Activated CD4-positive, alpha-beta memory T cell treated with anti-CD3 and anti-CD28 coated beads, Interleukin-2, amount 10 ng/mL, durations not matched to agents 7 days and 5 days (primary cell): ENCODE measurements at regions of chr17 and their contacts with region 1.

Region 1: GRCh38 chr17:28335201-28335955 is at the starts of genes IFT20 and TNFAIP1:
- DNase-seq: peak; percentile 99
- H3K4me3 Mint-ChIP-seq: peak within 1 kb of the TSS; percentile 98
- H3K27ac Mint-ChIP-seq: peak within 1 kb of the TSS; percentile 95
- H3K4me1 Mint-ChIP-seq: peaks cover 46% of the 10 kb centered on the region
- H3K27me3 Mint-ChIP-seq: no peaks in the 10 kb centered on the region
- total RNA-seq, gene IFT20: 22.2 to 25.7 TPM
- total RNA-seq, gene TNFAIP1: 25.2 to 26.5 TPM

Region 2: DNA sequence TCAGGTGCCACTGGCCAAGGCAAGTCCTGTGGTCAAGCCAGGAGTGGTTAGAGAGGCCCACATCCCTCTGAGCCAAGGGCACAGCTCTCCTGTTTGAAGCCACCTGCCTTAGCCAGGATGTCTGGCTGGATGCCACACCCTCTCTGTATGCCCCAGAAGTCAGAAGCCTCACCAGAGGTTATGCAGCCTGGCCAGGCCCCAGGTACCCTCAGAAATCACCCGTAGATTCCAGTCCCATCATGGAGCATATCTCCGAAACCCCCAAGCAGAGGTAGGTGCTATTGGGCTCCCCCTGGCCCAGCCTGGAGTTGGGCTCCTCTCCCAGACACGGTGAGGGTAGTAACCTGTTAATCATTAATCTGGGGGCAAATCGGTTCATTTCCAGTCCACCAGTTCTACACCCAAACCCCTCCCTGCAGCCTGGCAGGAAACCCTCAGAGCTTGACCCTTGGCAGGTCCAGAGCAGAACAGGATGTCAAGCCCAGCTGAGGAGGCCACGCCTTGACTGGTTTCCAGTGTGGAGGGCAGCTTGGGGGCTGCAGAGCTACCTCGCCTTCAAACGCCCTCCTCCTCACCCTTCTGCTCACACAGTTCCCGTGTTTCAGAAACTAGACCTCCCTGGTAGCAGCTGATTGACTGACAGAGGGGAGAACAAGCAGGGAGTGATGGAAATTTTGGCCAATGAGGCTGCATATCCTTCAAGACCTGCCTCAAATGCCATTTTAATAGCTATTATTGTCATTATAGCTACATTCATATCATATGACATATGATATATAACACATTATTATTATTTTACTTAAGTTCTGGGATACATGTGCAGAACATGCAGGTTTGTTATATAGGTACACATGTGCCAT is 76.8 kb before region 1 on chr17:
- CTCF ChIA-PET with region 1: no interaction called
- POLR2A ChIA-PET with region 1: no interaction called
- DNase-seq: no peak
- H3K4me3 Mint-ChIP-seq: no peak overlapping the region
- H3K27ac Mint-ChIP-seq: no peak overlapping the region
- H3K4me1 Mint-ChIP-seq: no peaks in the 10 kb centered on the region
- H3K27me3 Mint-ChIP-seq: peaks cover 6% of the 10 kb centered on the region

Region 3: GRCh38 chr17:28318759-28319660 is 16.4 kb before region 1 on chr17 and contains the start of gene TMEM97:
- CTCF ChIA-PET with region 1: interaction called, 13 read pairs
- POLR2A ChIA-PET with region 1: interaction called, 29 read pairs
- DNase-seq: peak; percentile 95
- H3K4me3 Mint-ChIP-seq: peak within 1 kb of the TSS; percentile 89
- H3K27ac Mint-ChIP-seq: peak within 1 kb of the TSS; percentile 55
- H3K4me1 Mint-ChIP-seq: peaks cover 41% of the 10 kb centered on the region
- H3K27me3 Mint-ChIP-seq: no peaks in the 10 kb centered on the region
- total RNA-seq, gene TMEM97: 23.3 to 26.6 TPM

Region 4: GRCh38 chr17:28346746-28347246 is 11.4 kb after region 1 on chr17:
- CTCF ChIA-PET with region 1: no interaction called
- POLR2A ChIA-PET with region 1: interaction called, 35 read pairs
- DNase-seq: no peak
- H3K4me3 Mint-ChIP-seq: no peak overlapping the region
- H3K27ac Mint-ChIP-seq: no peak overlapping the region
- H3K4me1 Mint-ChIP-seq: no peaks in the 10 kb centered on the region
- H3K27me3 Mint-ChIP-seq: no peaks in the 10 kb centered on the region

Region 5: DNA sequence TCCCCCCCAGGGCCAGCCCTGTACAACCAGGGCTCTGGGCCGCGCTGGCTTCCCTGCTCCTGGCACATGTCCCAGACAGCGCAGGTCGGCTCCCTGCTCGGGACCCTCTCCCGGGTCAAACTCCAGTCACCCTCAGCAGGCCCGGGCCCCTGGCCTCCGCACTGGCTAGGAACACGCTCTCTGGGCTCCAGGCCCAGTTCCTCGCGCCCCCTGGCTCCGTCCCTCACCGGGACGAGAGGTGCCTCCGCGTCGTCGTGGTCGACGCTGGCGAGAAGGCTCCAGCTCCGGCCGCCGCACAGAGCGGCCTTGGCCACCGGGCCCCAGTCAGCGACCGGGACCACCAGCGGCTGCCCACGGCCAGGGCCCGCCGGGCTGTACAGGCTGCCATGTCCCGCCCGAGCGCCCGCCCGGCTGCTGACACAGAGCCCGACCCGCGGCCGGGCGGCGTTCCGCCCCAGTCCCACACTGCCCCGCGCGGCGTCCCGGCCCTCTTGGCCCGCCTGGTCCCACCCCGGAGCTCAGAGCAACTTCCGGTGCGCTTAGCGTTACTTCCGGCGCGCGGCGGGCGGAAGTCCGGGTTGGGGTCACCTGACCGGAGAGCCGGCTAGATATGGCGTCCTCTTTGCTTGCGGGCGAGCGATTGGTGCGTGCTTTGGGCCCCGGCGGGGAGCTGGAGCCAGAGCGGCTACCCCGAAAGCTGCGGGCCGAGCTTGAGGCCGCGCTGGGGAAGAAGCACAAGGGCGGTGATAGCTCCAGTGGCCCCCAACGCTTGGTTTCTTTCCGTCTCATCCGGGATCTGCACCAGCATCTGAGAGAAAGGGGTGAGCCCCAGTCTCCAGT is 21.9 kb after region 1 on chr17 and contains the start of gene POLDIP2:
- CTCF ChIA-PET with region 1: interaction called, 36 read pairs
- POLR2A ChIA-PET with region 1: interaction called, 91 read pairs
- DNase-seq: peak; percentile 97
- H3K4me3 Mint-ChIP-seq: peak within 1 kb of the TSS; percentile 95
- H3K27ac Mint-ChIP-seq: peak within 1 kb of the TSS; percentile 86
- H3K4me1 Mint-ChIP-seq: peaks cover 38% of the 10 kb centered on the region
- H3K27me3 Mint-ChIP-seq: no peaks in the 10 kb centered on the region
- total RNA-seq, gene POLDIP2: 54.3 to 56.2 TPM

Region 6: DNA sequence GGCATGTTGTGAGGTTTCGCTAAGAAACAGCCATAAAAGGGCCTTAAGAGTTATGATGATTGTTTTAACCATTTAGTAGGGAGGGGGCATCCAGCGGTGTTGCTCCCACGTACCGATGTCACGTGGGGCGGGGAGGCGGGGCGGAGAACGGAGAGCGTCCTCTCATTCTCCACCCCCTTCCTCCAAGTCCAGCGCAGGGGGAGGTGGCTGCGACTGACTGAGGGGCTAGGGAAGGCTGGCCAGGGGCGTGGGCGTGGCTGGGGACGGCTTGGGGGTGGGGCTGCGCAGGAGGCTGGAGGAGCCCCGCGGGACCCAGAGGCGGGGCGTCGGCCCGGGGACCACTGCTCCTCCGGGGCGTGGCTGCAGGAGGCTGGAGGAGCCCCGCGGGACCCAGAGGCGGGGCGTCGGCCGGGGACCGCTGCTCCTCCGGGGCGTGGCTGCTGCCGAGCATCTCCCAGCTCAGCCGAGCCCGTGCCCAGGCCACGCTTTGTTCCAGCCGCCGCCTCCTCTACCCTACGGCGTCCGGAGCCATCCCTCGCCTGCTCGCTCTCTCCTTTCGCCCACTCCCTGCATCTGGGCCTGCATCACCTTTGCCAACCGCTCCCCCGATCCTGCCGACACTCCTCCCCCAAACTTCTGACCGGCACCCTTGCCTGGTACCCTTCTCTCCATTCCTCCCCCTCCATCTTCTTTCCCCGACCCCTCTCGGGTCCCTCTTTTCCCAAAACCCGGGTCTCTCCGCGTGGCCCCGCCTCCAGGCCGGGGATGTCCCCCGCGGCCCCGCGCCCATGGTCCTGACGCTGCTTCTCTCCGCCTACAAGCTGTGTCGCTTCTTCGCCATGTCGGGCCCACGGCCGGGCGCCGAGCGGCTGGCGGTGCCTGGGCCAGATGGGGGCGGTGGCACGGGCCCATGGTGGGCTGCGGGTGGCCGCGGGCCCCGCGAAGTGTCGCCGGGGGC is 36.1 kb after region 1 on chr17 and contains the start of gene SARM1:
- CTCF ChIA-PET with region 1: no interaction called
- POLR2A ChIA-PET with region 1: interaction called, 18 read pairs
- DNase-seq: peak; percentile 90
- H3K4me3 Mint-ChIP-seq: peak within 1 kb of the TSS; percentile 90
- H3K27ac Mint-ChIP-seq: peak within 1 kb of the TSS; percentile 77
- H3K4me1 Mint-ChIP-seq: peaks cover 23% of the 10 kb centered on the region
- H3K27me3 Mint-ChIP-seq: no peaks in the 10 kb centered on the region
- total RNA-seq, gene SARM1: 17.2 to 17.5 TPM

Region 7: DNA sequence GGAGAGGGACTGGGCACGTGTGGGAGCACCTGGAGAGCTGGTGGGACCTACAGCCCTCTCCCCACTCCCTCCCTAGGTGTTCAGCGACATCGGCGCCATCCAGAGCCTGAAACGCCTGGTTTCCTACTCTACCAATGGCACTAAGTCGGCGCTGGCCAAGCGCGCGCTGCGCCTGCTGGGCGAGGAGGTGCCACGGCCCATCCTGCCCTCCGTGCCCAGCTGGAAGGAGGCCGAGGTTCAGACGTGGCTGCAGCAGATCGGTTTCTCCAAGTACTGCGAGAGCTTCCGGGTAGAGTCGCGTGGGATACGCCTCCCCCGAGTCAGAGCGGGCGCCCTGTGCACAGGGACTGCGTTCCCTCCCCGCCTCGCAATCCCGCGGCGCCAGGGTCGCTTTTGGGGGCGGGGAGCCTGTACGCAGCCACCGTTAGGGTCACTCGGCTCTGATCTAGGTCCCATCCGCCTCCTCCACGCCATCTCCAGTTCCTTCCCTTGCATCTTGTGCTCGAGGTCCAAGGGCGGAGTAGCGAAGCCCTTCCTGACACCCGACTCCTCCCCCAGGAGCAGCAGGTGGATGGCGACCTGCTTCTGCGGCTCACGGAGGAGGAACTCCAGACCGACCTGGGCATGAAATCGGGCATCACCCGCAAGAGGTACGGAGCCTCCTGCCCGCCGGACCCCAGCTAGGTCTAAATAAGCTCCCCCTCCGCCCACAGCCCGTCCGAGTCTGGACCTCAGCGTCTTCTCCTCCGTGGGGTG is 49.1 kb after region 1 on chr17:
- CTCF ChIA-PET with region 1: interaction called, 3 read pairs
- POLR2A ChIA-PET with region 1: interaction called, 22 read pairs
- DNase-seq: peak; percentile 80
- H3K4me3 Mint-ChIP-seq: peak overlapping the region; percentile 86
- H3K27ac Mint-ChIP-seq: peak overlapping the region; percentile 78
- H3K4me1 Mint-ChIP-seq: peaks cover 32% of the 10 kb centered on the region
- H3K27me3 Mint-ChIP-seq: no peaks in the 10 kb centered on the region

Region 8: GRCh38 chr17:28416703-28417311 is 81.4 kb after region 1 on chr17:
- CTCF ChIA-PET with region 1: interaction called, 13 read pairs
- POLR2A ChIA-PET with region 1: interaction called, 4 read pairs
- DNase-seq: peak; percentile 62
- H3K4me3 Mint-ChIP-seq: no peak overlapping the region
- H3K27ac Mint-ChIP-seq: no peak overlapping the region
- H3K4me1 Mint-ChIP-seq: no peaks in the 10 kb centered on the region
- H3K27me3 Mint-ChIP-seq: peaks cover 22% of the 10 kb centered on the region

Region 9: GRCh38 chr17:28447396-28447760 is 112.0 kb after region 1 on chr17:
- CTCF ChIA-PET with region 1: no interaction called
- POLR2A ChIA-PET with region 1: no interaction called
- DNase-seq: no peak
- H3K4me3 Mint-ChIP-seq: no peak overlapping the region
- H3K27ac Mint-ChIP-seq: no peak overlapping the region
- H3K4me1 Mint-ChIP-seq: no peaks in the 10 kb centered on the region
- H3K27me3 Mint-ChIP-seq: peaks cover 31% of the 10 kb centered on the region

Region 10: GRCh38 chr17:28494445-28495188 is 159.2 kb after region 1 on chr17:
- CTCF ChIA-PET with region 1: no interaction called
- POLR2A ChIA-PET with region 1: no interaction called
- DNase-seq: peak; percentile 77
- H3K4me3 Mint-ChIP-seq: no peak overlapping the region
- H3K27ac Mint-ChIP-seq: no peak overlapping the region
- H3K4me1 Mint-ChIP-seq: no peaks in the 10 kb centered on the region
- H3K27me3 Mint-ChIP-seq: peaks cover 8% of the 10 kb centered on the region